ENCODE measurements at regions of chr10 and their contacts with region 1.

Region 1: GRCh38 chr10:63054889-63055611 is 78.1 kb upstream of the NRBF2 start:
- DNase-seq: no peak
- ATAC-seq: no peak
- H3K4me3 ChIP-seq: no peak overlapping the region
- H3K27ac ChIP-seq: no peak overlapping the region
- H3K4me1 ChIP-seq: no peaks in the 10 kb centered on the region
- H3K27me3 ChIP-seq: peaks cover 0 to 18% (median 6%) of the 10 kb centered on the region in 7 donors
- CTCF ChIP-seq: no peak

Region 2: DNA sequence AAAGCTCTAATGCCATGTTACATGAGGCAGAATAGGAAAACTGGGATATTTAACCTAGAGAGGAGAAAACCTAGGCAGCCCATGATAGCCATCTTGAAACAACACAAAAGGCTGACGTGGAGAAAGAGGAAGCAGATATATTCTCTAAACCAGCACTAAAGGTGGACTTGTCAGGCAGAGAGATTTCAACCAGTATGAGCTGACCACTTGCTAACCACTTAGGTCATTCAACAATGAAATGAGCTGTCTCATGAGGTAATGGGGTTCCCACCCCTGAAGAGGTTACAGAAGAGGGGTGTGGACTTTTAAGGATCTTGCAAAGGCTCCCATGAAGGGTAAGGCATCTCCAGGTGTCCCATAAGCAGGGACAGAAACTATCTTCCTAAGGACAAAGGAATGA is 212.1 kb before region 1 on chr10:
- intact Hi-C with region 1: loop called in 1 of 10 experiments (anchors 10 kb)
- DNase-seq: no peak
- ATAC-seq: no peak
- H3K4me3 ChIP-seq: no peak overlapping the region
- H3K27ac ChIP-seq: no peak overlapping the region
- H3K4me1 ChIP-seq: no peaks in the 10 kb centered on the region
- H3K27me3 ChIP-seq: no peaks in the 10 kb centered on the region
- CTCF ChIP-seq: no peak

Region 3: GRCh38 chr10:63106111-63106755 is 51.2 kb after region 1 on chr10:
- intact Hi-C with region 1: no loop called
- DNase-seq: peak; percentile 19 to 39
- ATAC-seq: peak in 6 of 8 donors; percentile 34 to 66 (median 45)
- H3K4me3 ChIP-seq: no peak overlapping the region
- H3K27ac ChIP-seq: peak overlapping the region in 8 of 10 donors; percentile 12 to 75 (median 48)
- H3K4me1 ChIP-seq: peaks cover 0 to 16% (median 5%) of the 10 kb centered on the region in 9 donors
- H3K27me3 ChIP-seq: no peaks in the 10 kb centered on the region
- CTCF ChIP-seq: no peak

Region 4: DNA sequence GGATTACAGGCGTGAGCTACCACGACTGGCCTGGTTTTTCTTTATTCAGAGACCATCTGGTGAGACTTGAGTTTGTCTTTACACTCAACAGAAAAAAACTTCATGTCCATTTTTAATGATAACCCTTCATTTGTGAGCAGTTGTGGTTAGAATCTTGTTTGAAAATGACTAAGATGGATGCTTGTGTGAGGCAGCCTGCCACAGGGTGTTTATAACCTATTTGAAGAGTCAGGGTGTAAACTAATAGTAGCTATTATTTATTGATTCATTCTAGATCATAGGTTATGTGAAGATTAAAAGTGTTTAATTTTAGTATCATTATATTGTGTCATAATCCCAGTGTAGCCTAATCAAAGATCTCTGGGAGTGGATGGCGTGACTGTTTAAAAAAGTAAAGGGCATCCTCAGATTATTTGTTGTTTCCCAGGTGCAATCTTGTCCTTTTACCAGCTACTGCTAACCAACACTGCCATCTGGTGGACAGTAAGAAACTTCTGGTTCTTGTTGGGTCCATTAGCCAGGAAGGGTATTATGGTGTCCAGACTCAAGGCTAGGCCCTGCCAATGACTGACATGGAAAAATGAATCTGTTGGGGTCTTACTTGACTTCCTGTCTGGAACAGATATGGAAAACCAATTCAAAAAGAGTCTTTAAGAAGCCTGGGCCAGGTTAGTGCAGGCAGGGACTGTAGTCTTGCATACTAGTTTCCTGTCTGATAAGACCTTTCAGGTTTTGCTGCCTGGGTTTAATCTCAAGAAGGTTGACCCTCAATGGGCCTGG is 103.0 kb after region 1 on chr10:
- intact Hi-C with region 1: no loop called
- DNase-seq: peak in 1 of 2 donors; percentile 28
- ATAC-seq: peak; percentile 67 to 77 (median 71)
- H3K4me3 ChIP-seq: no peak overlapping the region
- H3K27ac ChIP-seq: no peak overlapping the region
- H3K4me1 ChIP-seq: peaks cover 0 to 24% (median 13%) of the 10 kb centered on the region in 9 donors
- H3K27me3 ChIP-seq: no peaks in the 10 kb centered on the region
- CTCF ChIP-seq: peak; percentile 55 to 89 (median 84)

Measured in heart right ventricle (tissue), 16 donors.